IMR-90 (cell line): ENCODE measurements at regions of chr16 and their contacts with region 1.

Region 1: DNA sequence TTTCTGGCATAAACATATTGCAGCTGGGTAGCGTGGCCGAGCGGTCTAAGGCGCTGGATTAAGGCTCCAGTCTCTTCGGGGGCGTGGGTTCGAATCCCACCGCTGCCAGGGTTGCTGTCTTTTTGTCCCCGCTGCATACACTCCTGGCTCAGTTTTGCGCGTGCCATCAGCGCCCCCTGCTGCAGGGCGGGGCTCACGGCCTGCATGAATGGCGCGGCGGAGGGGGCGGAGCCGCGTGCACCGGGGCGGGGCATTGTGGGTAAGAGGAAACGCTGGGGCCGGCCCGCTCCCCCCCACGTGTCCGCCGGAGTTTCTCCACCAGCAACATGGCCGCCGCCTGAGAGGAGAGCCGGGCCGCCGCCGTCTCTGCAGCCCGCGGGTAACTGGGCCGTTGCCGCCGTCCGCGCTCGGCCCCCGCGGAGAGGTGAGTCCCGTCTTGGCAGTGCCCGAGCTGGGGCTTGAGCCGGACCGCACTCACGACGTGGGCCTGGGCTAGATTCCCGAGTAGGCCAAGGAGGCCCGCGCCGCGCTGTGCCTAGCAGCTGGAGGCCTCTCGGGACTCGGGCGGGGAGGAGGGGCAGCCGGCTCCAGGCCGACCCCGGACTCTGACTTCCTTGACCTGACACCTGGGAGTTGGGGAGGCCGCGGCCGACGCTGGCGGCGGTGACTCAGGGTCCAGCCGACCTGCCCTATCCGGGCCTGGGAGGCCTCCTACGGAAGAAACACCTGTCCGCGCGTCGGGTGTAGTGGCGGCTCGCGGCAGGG is at the start of gene POLR3E:
- DNase-seq: peak; percentile 95
- ATAC-seq: peak; percentile 93
- H3K4me3 ChIP-seq: peak within 1 kb of the TSS; percentile 75
- H3K27ac ChIP-seq: peak within 1 kb of the TSS; percentile 80
- H3K4me1 ChIP-seq: peaks cover 2% of the 10 kb centered on the region; the same call in 1 of the 2 replicates
- H3K27me3 ChIP-seq: no peaks in the 10 kb centered on the region
- CTCF ChIP-seq: peak; percentile 94
- POLR2A ChIP-seq: peak; percentile 64; the same call in 1 of the 2 replicates
- RAD21 ChIP-seq: peak; percentile 84
- total RNA-seq, gene POLR3E: 19.9 and 71.1 TPM in 2 replicates

Region 2: GRCh38 chr16:22007509-22008214 is 289.6 kb before region 1 on chr16 and contains the start of gene MOSMO:
- CTCF ChIA-PET with region 1: no interaction called
- POLR2A ChIA-PET with region 1: no interaction called
- dilution Hi-C with region 1: no loop called
- in situ Hi-C with region 1: loop called (anchors 10 kb)
- intact Hi-C with region 1: loop called (anchors 5 kb)
- DNase-seq: peak; percentile 63
- ATAC-seq: peak; percentile 92
- H3K4me3 ChIP-seq: peak within 1 kb of the TSS; percentile 92
- H3K27ac ChIP-seq: peak within 1 kb of the TSS; percentile 93
- H3K4me1 ChIP-seq: peaks cover 8% of the 10 kb centered on the region
- H3K27me3 ChIP-seq: no peaks in the 10 kb centered on the region
- CTCF ChIP-seq: 0 out of 2 replicates have a peak, but pooled peaks have one; percentile 8
- POLR2A ChIP-seq: peak; percentile 50; the same call in 1 of the 2 replicates
- RAD21 ChIP-seq: no peak
- total RNA-seq, gene MOSMO: 16.0 and 16.9 TPM in 2 replicates

Region 3: DNA sequence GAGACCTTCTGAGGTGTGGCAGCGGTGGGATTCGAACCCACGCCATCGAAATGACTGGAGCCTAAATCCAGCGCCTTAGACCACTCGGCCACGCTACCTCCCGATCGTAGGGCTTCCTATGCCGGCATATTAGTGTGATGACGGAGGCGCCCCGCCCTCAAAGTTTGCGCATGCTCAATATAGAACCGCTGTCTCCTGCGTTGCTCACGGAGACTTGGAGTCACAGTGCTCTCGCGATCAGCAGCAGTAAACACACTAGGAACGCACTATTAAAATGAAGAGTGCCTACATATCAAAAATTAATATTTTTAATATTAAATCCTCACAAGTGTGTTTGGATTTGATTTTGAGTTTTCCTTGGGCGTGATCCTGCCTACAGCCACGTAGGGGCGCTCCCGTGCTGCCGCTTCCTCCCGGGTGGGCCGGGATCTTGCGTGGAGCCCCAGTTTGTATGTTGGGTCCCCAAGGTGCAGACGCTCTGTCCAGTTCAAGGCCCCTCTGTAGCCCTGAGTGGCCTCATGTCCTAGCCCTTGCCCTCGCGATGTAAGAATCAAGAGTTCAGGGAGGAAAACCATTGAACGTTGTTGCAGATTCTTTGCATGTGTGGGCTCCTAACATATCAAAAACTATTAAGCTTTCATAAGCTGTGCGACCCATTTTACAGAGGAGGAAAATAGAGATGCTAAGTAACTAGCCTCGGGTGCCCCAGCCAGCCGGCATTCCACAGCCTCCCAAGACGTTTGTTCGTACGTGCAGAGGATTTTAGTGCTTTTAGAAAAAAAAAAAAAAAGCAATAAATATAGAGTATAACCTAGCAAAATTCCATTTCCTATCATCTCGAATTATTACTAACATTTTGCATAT is 101.4 kb before region 1 on chr16:
- CTCF ChIA-PET with region 1: interaction called, 5 read pairs
- POLR2A ChIA-PET with region 1: no interaction called
- dilution Hi-C with region 1: no loop called
- in situ Hi-C with region 1: loop called (anchors 5 kb)
- intact Hi-C with region 1: loop called (anchors 1 kb)
- DNase-seq: peak; percentile 87
- ATAC-seq: peak; percentile 27
- H3K4me3 ChIP-seq: peak overlapping the region; percentile 61
- H3K27ac ChIP-seq: peak overlapping the region; percentile 8
- H3K4me1 ChIP-seq: peaks cover 4% of the 10 kb centered on the region
- H3K27me3 ChIP-seq: no peaks in the 10 kb centered on the region
- CTCF ChIP-seq: peak; percentile 73
- POLR2A ChIP-seq: no peak
- RAD21 ChIP-seq: peak; percentile 69

Region 4: DNA sequence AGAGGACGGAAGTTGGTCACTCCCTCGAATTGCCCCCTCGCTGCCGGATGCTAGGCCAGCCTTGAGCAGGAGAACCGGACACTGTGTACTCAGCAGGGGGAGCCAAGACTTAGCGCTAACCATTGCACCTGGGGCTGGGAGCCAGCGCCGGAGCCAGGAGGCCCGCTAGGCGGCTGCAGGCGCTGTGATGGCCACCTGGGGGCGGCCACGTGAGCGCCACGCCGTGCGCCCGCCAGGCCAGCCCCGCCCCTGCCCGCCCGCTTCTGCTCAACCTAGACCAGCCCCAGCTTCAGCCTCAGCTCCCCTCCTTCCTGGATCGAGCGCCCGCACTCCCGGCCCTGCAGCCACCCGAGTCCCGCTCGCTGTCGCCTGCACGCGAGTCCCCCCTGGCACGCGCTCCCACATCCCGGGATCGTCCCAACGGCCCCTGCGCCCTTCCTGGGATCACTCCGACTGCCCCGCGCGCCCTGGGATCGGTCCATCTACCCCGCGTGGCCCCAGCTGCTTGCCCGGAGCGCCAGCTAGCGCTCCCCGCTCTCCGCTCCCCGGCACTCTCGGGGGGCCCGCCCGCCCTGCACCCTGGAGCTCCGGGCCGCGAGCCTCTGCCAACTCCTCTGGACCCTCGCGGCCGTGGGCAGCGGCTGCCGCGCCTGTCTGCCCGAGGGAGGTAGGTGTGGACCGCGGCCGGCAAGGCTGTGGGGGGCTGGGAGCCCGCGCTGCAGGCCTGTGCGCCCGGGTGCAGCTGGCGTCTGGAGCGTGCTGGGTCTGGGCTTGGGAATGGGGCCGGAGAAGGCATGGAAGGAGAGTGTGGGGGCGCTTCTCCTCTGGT is 91.1 kb before region 1 on chr16 and contains the start of gene EEF2K:
- CTCF ChIA-PET with region 1: interaction called, 7 read pairs
- POLR2A ChIA-PET with region 1: no interaction called
- dilution Hi-C with region 1: no loop called
- in situ Hi-C with region 1: loop called (anchors 5 kb)
- intact Hi-C with region 1: loop called (anchors 1 kb)
- DNase-seq: peak; percentile 95
- ATAC-seq: peak; percentile 93
- H3K4me3 ChIP-seq: peak within 1 kb of the TSS; percentile 73
- H3K27ac ChIP-seq: peak within 1 kb of the TSS; percentile 71
- H3K4me1 ChIP-seq: peaks cover 7% of the 10 kb centered on the region; the same call in 1 of the 2 replicates
- H3K27me3 ChIP-seq: no peaks in the 10 kb centered on the region
- CTCF ChIP-seq: peak; percentile 88
- POLR2A ChIP-seq: no peak
- RAD21 ChIP-seq: peak; percentile 62
- total RNA-seq, gene EEF2K: 9.7 and 10.3 TPM in 2 replicates

Region 5: DNA sequence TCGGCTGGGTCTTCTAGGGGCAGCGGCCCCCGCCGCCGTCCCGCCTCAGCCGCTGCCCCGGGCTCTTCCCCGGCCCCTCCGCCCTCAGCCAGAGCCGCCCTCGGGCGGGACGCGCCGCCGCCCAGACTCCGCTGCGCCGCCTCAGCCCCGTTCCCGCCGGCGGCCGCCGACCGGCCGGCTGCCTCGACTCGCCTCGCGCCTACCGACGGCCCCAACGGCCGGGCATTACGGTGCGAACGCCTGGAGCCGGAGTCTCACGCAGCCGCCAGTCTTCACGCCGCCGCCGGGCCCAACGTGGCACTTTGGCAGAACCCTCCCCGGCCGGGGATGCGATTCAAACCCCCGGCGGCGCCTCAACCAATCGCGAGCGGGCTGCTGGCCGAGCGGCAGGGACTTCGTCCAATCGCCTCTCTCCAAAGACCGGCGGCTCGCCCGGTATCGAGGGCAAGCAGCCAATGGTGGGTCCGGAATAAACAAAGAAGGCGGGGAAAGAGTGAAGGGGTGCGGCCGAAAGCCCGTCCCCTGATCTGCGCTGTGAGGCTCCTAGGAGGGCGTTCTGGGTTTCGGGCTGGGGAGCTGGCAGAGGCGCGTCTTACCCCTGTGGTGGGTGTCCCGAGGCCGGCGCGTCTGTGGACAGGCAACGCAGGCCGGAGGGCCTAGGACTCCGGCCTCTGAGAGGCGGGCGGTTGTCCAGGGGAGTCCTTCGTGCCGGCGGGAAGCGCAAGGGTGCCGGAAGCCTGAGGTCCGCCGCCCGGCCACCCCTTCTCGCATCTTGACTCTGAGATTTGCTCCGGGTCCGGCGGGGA is 77.2 kb after region 1 on chr16 and contains the start of gene CDR2:
- CTCF ChIA-PET with region 1: no interaction called
- POLR2A ChIA-PET with region 1: no interaction called
- dilution Hi-C with region 1: no loop called
- in situ Hi-C with region 1: no loop called
- intact Hi-C with region 1: no loop called
- DNase-seq: peak; percentile 94
- ATAC-seq: peak; percentile 88
- H3K4me3 ChIP-seq: peak within 1 kb of the TSS; percentile 66
- H3K27ac ChIP-seq: peak within 1 kb of the TSS; percentile 91
- H3K4me1 ChIP-seq: peaks cover 8% of the 10 kb centered on the region; the same call in 1 of the 2 replicates
- H3K27me3 ChIP-seq: no peaks in the 10 kb centered on the region
- CTCF ChIP-seq: no peak
- POLR2A ChIP-seq: peak; percentile 95
- RAD21 ChIP-seq: no peak
- total RNA-seq, gene CDR2: 44.2 and 48.4 TPM in 2 replicates

Region 6: GRCh38 chr16:22857296-22858025 is 560.2 kb after region 1 on chr16:
- CTCF ChIA-PET with region 1: no interaction called
- POLR2A ChIA-PET with region 1: no interaction called
- dilution Hi-C with region 1: no loop called
- in situ Hi-C with region 1: no loop called
- intact Hi-C with region 1: no loop called
- DNase-seq: no peak
- ATAC-seq: no peak
- H3K4me3 ChIP-seq: no peak overlapping the region
- H3K27ac ChIP-seq: no peak overlapping the region
- H3K4me1 ChIP-seq: no peaks in the 10 kb centered on the region
- H3K27me3 ChIP-seq: no peaks in the 10 kb centered on the region
- CTCF ChIP-seq: no peak
- POLR2A ChIP-seq: no peak
- RAD21 ChIP-seq: no peak